CD4-positive, alpha-beta T cell (primary cell): ENCODE measurements at regions of chr3 and their contacts with region 1.

Region 1: DNA sequence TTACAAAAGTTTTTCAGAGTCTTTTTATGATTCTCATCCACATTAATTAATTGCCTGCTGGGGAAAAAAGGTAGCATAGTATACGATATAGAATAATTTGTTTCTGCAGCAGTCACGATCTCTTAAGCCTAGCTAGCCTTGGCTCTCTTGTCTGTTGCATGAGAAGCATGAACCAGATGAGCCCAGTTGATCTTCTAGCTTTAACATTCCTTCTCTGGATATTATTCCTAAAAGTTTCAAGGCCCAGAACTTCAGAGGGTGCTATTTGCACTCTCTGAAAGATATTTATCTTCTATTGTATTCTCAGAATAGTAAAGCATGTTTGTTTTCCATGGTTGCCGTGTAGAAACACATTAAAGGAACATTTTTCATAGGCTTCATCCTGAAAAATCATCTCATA is 69.3 kb downstream of the BTLA start:
- DNase-seq: no peak
- ATAC-seq: no peak
- H3K4me3 ChIP-seq: no peak overlapping the region
- H3K4me3 Mint-ChIP-seq: no peak overlapping the region
- H3K27ac ChIP-seq: no peak overlapping the region
- H3K27ac Mint-ChIP-seq: no peak overlapping the region
- H3K4me1 ChIP-seq: no peaks in the 10 kb centered on the region
- H3K4me1 Mint-ChIP-seq: peaks cover 5% of the 10 kb centered on the region
- H3K27me3 ChIP-seq: no peaks in the 10 kb centered on the region
- H3K27me3 Mint-ChIP-seq: no peaks in the 10 kb centered on the region
- CTCF ChIP-seq: no peak

Region 2: GRCh38 chr3:112074721-112075497 is 355.1 kb before region 1 on chr3:
- CTCF ChIA-PET with region 1: no interaction called
- POLR2A ChIA-PET with region 1: no interaction called
- intact Hi-C with region 1: no loop called
- DNase-seq: peak in 12 of 14 experiments; percentile 5 to 77 (median 42)
- ATAC-seq: peak; percentile 86
- H3K4me3 ChIP-seq: no peak overlapping the region
- H3K4me3 Mint-ChIP-seq: peak overlapping the region; percentile 70
- H3K27ac ChIP-seq: peak overlapping the region in 1 of 2 donors; percentile 48
- H3K27ac Mint-ChIP-seq: peak overlapping the region; percentile 94
- H3K4me1 ChIP-seq: peaks cover 21% of the 10 kb centered on the region
- H3K4me1 Mint-ChIP-seq: peaks cover 56% of the 10 kb centered on the region
- H3K27me3 ChIP-seq: no peaks in the 10 kb centered on the region
- H3K27me3 Mint-ChIP-seq: no peaks in the 10 kb centered on the region
- CTCF ChIP-seq: no peak

Region 3: DNA sequence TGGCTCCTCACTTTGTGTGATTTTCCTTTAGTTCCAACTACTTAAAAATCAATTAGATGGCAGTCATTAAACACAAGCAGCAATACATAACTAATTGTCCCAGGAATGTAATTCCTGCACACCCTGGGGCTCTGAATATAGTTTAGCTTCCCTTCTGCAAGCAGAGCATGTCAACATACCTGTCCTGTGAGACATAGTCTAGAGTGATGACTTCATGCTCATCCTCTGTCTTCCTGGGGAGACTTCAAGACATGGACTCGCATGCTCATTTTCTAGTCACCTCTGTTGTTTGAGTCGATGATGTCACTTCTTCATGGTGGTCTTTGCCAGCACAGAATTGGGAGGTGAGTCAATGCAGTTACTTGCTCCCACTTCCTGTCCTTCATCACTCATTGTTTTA is 328.0 kb before region 1 on chr3:
- CTCF ChIA-PET with region 1: no interaction called
- POLR2A ChIA-PET with region 1: no interaction called
- intact Hi-C with region 1: no loop called
- DNase-seq: no peak
- ATAC-seq: no peak
- H3K4me3 ChIP-seq: no peak overlapping the region
- H3K4me3 Mint-ChIP-seq: no peak overlapping the region
- H3K27ac ChIP-seq: no peak overlapping the region
- H3K27ac Mint-ChIP-seq: no peak overlapping the region
- H3K4me1 ChIP-seq: no peaks in the 10 kb centered on the region
- H3K4me1 Mint-ChIP-seq: no peaks in the 10 kb centered on the region
- H3K27me3 ChIP-seq: no peaks in the 10 kb centered on the region
- H3K27me3 Mint-ChIP-seq: no peaks in the 10 kb centered on the region
- CTCF ChIP-seq: no peak

Region 4: DNA sequence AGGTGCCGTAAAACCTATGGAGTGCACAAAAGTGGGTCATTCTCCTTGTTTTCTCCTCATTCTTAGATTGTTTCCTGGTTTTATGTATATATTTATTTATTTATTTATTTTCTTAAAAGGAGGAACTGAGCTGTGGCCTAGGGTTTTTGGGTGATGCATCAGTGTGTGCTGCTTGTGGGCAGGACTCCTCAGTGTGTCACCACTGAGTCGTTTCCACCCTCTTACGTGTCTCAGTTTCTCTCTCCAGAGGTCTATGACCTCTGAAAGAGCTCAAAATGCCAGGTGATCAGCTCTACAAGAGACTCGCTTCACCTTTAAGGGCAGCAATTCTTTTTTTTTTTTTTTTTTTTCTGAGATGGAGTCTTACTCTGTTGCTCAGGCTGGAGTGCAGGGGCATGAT is 24.1 kb before region 1 on chr3:
- CTCF ChIA-PET with region 1: no interaction called
- POLR2A ChIA-PET with region 1: no interaction called
- intact Hi-C with region 1: no loop called
- DNase-seq: peak in 2 of 14 experiments; percentile 20 to 46
- ATAC-seq: no peak
- H3K4me3 ChIP-seq: no peak overlapping the region
- H3K4me3 Mint-ChIP-seq: no peak overlapping the region
- H3K27ac ChIP-seq: no peak overlapping the region
- H3K27ac Mint-ChIP-seq: no peak overlapping the region
- H3K4me1 ChIP-seq: no peaks in the 10 kb centered on the region
- H3K4me1 Mint-ChIP-seq: no peaks in the 10 kb centered on the region
- H3K27me3 ChIP-seq: no peaks in the 10 kb centered on the region
- H3K27me3 Mint-ChIP-seq: no peaks in the 10 kb centered on the region
- CTCF ChIP-seq: no peak

Region 5: GRCh38 chr3:112448939-112449338 is 19.0 kb after region 1 on chr3:
- CTCF ChIA-PET with region 1: no interaction called
- POLR2A ChIA-PET with region 1: no interaction called
- intact Hi-C with region 1: loop called in 1 of 2 experiments (anchors 2 kb)
- DNase-seq: no peak
- ATAC-seq: no peak
- H3K4me3 ChIP-seq: no peak overlapping the region
- H3K4me3 Mint-ChIP-seq: no peak overlapping the region
- H3K27ac ChIP-seq: no peak overlapping the region
- H3K27ac Mint-ChIP-seq: no peak overlapping the region
- H3K4me1 ChIP-seq: no peaks in the 10 kb centered on the region
- H3K4me1 Mint-ChIP-seq: peaks cover 6% of the 10 kb centered on the region
- H3K27me3 ChIP-seq: no peaks in the 10 kb centered on the region
- H3K27me3 Mint-ChIP-seq: no peaks in the 10 kb centered on the region
- CTCF ChIP-seq: no peak

Region 6: DNA sequence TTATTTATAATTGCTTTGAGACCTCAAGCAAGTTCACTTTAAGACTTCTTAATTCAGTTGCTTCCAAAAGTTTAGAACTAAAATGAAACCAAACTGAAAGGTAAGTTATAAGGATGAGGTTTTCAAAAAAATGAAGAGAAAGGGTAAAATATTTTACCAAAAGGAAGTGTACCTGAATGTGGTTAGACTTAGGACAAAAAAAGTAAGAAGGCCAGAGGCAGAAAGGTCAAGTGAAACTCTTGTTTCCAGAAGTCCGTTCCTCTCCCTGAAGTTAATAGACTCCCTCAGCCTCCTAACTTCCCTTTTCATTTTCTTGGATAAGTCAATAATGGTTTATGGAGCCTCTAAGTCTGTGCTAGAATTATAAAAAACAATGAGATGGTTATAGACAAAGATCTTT is 52.7 kb after region 1 on chr3:
- CTCF ChIA-PET with region 1: no interaction called
- POLR2A ChIA-PET with region 1: no interaction called
- intact Hi-C with region 1: no loop called
- DNase-seq: no peak
- ATAC-seq: no peak
- H3K4me3 ChIP-seq: no peak overlapping the region
- H3K4me3 Mint-ChIP-seq: peak overlapping the region; percentile 52
- H3K27ac ChIP-seq: peak overlapping the region; percentile 14 to 18
- H3K27ac Mint-ChIP-seq: peak overlapping the region; percentile 81
- H3K4me1 ChIP-seq: peaks cover 31% of the 10 kb centered on the region
- H3K4me1 Mint-ChIP-seq: peaks cover 68% of the 10 kb centered on the region
- H3K27me3 ChIP-seq: no peaks in the 10 kb centered on the region
- H3K27me3 Mint-ChIP-seq: no peaks in the 10 kb centered on the region
- CTCF ChIP-seq: no peak